Activated CD4-positive, alpha-beta memory T cell treated with anti-CD3 and anti-CD28 coated beads for 36 hours (primary cell): ENCODE measurements at regions of chr1 and their contacts with region 1.

Region 1: DNA sequence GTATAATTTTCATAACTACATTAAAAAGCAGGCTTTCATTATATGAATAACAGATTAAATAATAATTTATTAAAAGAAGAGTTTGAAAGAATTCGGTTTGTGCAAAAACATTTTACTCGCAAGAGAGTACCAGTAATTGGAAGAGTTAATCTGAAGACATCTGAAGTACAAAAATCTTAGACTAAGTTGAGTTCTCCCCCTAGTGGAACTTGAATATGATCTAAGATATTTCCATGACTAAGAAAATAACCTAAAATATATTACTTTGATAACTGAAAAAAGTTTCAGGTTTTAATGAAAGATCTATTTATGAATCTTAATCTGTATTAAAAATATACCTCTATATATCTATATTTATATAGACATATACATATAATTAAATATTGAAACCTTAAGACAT is 112.5 kb upstream of the GFI1 start:
- DNase-seq: no peak
- H3K4me3 Mint-ChIP-seq: no peak overlapping the region
- H3K27ac Mint-ChIP-seq: no peak overlapping the region
- H3K4me1 Mint-ChIP-seq: peaks cover 34% of the 10 kb centered on the region
- H3K27me3 Mint-ChIP-seq: no peaks in the 10 kb centered on the region

Region 2: DNA sequence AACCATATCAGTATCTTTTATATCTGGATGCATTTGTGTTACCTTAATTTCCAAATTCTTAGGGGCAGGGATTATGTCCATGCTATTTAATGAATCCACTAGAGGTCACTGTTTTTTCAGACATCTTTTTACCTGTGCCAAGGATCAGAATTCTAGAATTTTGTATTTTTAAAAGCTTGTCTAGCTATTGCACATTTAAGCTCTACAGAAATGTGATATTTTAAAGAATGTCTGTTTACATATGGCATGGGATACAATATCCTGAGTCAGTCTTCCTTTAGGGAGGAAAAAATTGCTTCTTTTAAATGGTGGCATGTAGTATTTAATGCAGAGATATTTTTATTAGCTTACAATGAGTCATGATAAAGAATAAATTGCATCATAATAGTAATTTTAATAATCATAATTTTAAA is 289.0 kb before region 1 on chr1:
- CTCF ChIA-PET with region 1: interaction called, 18 read pairs
- POLR2A ChIA-PET with region 1: no interaction called
- intact Hi-C with region 1: loop called (anchors 1 kb)
- DNase-seq: no peak
- H3K4me3 Mint-ChIP-seq: no peak overlapping the region
- H3K27ac Mint-ChIP-seq: no peak overlapping the region
- H3K4me1 Mint-ChIP-seq: peaks cover 39% of the 10 kb centered on the region
- H3K27me3 Mint-ChIP-seq: no peaks in the 10 kb centered on the region

Region 3: GRCh38 chr1:92792340-92792782 is 193.2 kb after region 1 on chr1:
- CTCF ChIA-PET with region 1: no interaction called
- POLR2A ChIA-PET with region 1: no interaction called
- intact Hi-C with region 1: no loop called
- DNase-seq: no peak
- H3K4me3 Mint-ChIP-seq: no peak overlapping the region
- H3K27ac Mint-ChIP-seq: no peak overlapping the region
- H3K4me1 Mint-ChIP-seq: peaks cover 3% of the 10 kb centered on the region
- H3K27me3 Mint-ChIP-seq: peaks cover 22% of the 10 kb centered on the region